Mammary epithelial cell (primary cell): ENCODE measurements at regions of chr11 and their contacts with region 1.

Region 1: DNA sequence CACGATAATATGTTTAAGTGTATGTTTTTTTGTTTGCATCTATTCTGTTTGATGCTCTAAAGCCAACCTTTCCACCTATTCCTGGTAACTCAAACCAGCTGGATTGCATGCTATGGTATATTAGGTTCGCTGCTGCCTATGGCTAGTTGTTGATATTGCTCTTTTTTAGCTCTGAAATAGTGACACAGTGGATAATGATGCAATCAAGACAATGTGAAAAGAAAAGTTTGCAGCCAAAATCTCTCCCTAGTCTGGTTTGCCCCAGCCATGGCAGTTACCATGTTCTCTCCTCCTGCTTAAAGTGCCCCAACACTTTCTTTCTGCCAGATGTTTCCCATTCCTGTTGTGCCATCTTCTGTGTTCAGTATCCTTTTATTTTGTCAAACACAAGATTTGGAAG is 269.7 kb downstream of the DYNC2H1 start:
- DNase-seq: no peak
- H3K4me3 ChIP-seq: no peak overlapping the region
- H3K27ac ChIP-seq: no peak overlapping the region
- H3K4me1 ChIP-seq: no peaks in the 10 kb centered on the region
- H3K27me3 ChIP-seq: no peaks in the 10 kb centered on the region
- CTCF ChIP-seq: no peak

Region 2: DNA sequence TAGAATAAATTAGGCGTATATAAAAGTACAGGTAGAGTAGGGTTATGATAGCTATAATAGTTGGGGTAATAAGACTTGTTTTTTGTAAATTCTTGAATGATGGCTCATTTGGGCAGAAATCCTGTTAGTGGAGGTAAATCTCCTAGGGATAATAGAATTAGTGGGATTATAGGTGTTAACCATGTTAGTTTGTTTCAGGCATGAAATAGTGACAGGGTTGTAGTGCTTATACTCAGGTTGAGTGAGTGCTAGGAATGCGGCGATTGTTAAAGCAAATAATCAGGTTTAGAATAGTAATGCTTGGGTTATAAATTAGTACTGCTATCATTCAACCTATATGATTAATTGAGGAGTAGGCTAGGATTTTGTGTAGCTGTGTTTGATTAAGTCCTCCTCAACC is 27.4 kb after region 1 on chr11:
- CTCF ChIA-PET with region 1: no interaction called
- dilution Hi-C with region 1: no loop called
- in situ Hi-C with region 1: no loop called
- intact Hi-C with region 1: loop called (anchors 1 kb)
- DNase-seq: no peak
- H3K4me3 ChIP-seq: no peak overlapping the region
- H3K27ac ChIP-seq: no peak overlapping the region
- H3K4me1 ChIP-seq: no peaks in the 10 kb centered on the region
- H3K27me3 ChIP-seq: no peaks in the 10 kb centered on the region
- CTCF ChIP-seq: no peak